Uterus (tissue), 4 donors: ENCODE measurements at regions of chr12 and their contacts with region 1.

Region 1: GRCh38 chr12:64696080-64696741 is 63.0 kb downstream of the GNS start:
- DNase-seq: no peak
- H3K4me3 ChIP-seq: no peak overlapping the region
- H3K27ac ChIP-seq: peak overlapping the region; percentile 39 to 40
- H3K4me1 ChIP-seq: peaks cover 0 to 6% of the 10 kb centered on the region in 2 donors
- H3K27me3 ChIP-seq: no peaks in the 10 kb centered on the region
- CTCF ChIP-seq: peak; percentile 31 to 62 (median 50)
- POLR2A ChIP-seq: peak in 1 of 2 donors; percentile 13

Region 2: DNA sequence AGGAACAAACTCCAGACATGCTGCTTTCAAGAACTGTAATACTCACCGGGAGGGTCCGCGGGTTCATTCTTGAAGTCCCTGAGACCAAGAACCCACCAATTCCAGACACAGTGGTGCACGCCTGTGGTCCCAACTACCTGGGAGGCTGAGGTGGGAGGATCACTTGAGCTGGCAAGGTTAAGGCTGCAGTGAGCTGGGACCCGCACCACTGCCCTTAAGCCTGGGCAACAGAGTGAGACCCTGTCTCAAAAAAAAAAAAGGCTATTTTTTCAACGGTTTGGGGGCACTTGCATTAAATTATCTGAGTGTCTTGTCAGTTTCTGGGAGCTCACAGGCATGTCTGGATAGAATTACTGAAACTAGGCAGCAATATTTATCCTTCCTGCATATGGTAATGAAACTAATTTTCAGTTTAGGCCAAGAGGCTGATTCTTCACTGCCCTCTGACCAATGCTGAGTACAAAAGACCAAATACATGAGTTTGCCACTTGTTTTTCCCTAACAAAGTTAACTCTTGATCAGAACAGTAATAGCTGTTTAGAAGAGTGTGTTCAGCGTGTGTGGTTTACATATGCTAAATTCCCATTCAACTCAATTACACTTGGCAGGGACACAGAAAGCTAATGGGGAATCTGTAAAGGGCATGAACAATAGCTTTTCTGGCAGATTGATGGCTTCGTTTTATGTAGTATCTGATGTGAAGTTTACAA is 151.7 kb before region 1 on chr12:
- intact Hi-C with region 1: loop called (anchors 5 kb)
- DNase-seq: no peak
- H3K4me3 ChIP-seq: no peak overlapping the region
- H3K27ac ChIP-seq: no peak overlapping the region
- H3K4me1 ChIP-seq: no peaks in the 10 kb centered on the region
- H3K27me3 ChIP-seq: no peaks in the 10 kb centered on the region
- CTCF ChIP-seq: no peak
- POLR2A ChIP-seq: no peak

Region 3: DNA sequence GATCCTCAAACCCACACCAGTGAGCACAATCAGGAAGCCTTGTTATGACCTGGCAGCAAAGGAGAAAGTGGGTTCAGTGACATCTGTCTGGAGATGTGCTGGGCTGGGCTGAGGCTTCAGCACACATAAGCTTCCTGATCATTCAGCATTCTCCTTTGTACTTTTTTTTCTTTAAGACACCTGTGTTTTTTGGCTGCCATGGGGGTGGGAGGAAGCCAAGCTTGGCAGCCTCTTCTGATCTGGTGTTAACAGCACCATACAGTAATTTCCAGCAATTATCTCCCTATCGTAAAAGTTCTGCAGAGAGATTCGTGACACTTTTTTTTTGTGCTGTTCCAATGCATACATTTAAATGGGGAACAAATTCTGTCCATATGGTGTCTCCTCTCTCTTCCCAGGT is 124.8 kb before region 1 on chr12:
- intact Hi-C with region 1: no loop called
- DNase-seq: no peak
- H3K4me3 ChIP-seq: no peak overlapping the region
- H3K27ac ChIP-seq: no peak overlapping the region
- H3K4me1 ChIP-seq: no peaks in the 10 kb centered on the region
- H3K27me3 ChIP-seq: no peaks in the 10 kb centered on the region
- CTCF ChIP-seq: no peak
- POLR2A ChIP-seq: no peak

Region 4: GRCh38 chr12:64608901-64609535 is 87.2 kb before region 1 on chr12:
- intact Hi-C with region 1: loop called (anchors 10 kb)
- DNase-seq: peak in 1 of 2 donors; percentile 45
- H3K4me3 ChIP-seq: peak overlapping the region; percentile 71 to 97
- H3K27ac ChIP-seq: peak overlapping the region; percentile 84 to 97
- H3K4me1 ChIP-seq: peaks cover 0 to 3% of the 10 kb centered on the region in 2 donors
- H3K27me3 ChIP-seq: no peaks in the 10 kb centered on the region
- CTCF ChIP-seq: peak in 1 of 4 experiments; percentile 9
- POLR2A ChIP-seq: no peak

Region 5: DNA sequence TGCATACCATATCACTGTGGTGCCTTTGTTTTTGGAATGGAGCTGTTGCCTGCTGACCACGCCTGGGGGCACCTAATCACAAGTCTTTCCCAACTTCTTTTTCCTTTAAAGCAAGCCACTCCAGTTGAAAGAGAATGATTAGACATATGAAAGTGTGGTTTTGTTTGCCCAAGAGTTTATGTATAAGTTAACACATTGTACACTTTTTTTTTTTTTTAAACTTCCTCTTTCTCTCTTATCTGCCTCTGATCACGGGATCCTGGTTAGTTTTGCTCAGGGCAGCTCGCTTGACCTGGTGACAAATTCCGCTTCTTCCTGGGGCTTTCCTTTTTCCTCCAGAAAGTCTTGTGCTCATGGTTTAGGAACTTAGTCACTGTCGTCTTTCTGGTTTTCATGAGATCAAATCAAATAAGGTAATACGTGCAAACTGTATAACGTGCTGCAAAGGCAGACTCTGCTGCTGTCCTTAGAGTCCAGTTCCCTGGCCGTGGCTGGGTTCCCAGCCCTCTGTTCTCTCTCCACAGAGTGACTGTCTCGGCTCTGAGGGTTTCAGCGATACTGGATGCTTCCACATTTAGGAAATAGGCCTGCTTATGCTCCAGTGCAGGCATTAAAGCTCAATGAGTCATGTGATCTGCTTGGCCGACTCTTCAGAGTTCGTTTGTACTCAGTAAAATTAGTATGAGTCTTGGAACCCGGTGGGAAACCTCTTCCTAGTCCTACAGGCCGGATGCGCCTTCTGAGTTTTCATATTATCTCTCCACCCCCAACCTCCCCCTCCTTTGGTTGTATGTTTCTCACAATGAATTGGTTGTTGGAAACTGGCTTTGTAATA is 70.8 kb before region 1 on chr12:
- intact Hi-C with region 1: no loop called
- DNase-seq: peak; percentile 74 to 86
- H3K4me3 ChIP-seq: peak overlapping the region in 1 of 2 donors; percentile 21
- H3K27ac ChIP-seq: peak overlapping the region; percentile 83 to 89
- H3K4me1 ChIP-seq: peaks cover 9 to 18% of the 10 kb centered on the region in 2 donors
- H3K27me3 ChIP-seq: no peaks in the 10 kb centered on the region
- CTCF ChIP-seq: no peak
- POLR2A ChIP-seq: peak; percentile 10 to 12

Region 6: GRCh38 chr12:64931981-64932380 is 235.8 kb after region 1 on chr12:
- intact Hi-C with region 1: no loop called
- DNase-seq: no peak
- H3K4me3 ChIP-seq: no peak overlapping the region
- H3K27ac ChIP-seq: no peak overlapping the region
- H3K4me1 ChIP-seq: no peaks in the 10 kb centered on the region
- H3K27me3 ChIP-seq: no peaks in the 10 kb centered on the region
- CTCF ChIP-seq: no peak
- POLR2A ChIP-seq: no peak